A549 (cell line): ENCODE measurements at regions of chr19 and their contacts with region 1.

Region 1: DNA sequence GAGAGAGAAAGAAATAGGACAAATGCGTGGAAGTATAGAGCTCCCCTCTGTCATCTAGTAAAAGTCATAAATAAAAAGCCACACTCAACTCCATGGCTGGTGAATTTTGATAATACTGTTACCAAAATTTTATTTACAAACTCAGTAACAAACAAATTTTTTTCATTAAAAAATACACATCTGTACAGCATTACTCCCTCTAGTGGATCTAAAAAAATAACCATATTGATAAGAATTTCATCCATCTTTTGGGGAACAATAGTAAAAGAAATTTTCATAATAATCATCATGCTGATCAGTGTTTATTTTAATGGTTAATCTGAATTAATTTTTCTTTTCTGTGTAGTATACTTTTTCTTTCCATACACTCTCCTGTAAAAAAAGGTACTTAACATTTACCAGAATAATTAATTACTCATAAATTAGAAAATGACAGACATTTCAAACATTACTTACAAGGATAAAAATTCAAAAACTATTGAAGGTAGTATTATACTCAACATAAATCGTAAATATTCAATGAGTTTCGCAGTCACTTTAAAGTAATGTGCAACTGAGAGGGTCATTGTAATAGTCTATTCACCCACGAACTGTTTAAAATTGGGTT is 173.5 kb upstream of the LSM14A start:
- DNase-seq: peak; percentile 16 to 44
- ATAC-seq: peak in 1 of 2 experiments; percentile 38; a peak in 1 of 6 replicates
- H3K4me3 ChIP-seq: peak overlapping the region; percentile 3; the same call in 2 of the 3 replicates
- H3K27ac ChIP-seq: no peak overlapping the region
- H3K4me1 ChIP-seq: peaks cover 10% of the 10 kb centered on the region; the same call in 2 of the 3 replicates
- CTCF ChIP-seq: peak; percentile 82
- EP300 ChIP-seq: no peak
- POLR2A ChIP-seq: no peak
- RAD21 ChIP-seq: peak; percentile 58 to 73

Region 2: GRCh38 chr19:33785795-33786194 is 213.0 kb before region 1 on chr19:
- CTCF ChIA-PET with region 1: interaction called, 17 read pairs
- POLR2A ChIA-PET with region 1: no interaction called
- DNase-seq: no peak
- ATAC-seq: no peak
- H3K4me3 ChIP-seq: no peak overlapping the region
- H3K27ac ChIP-seq: no peak overlapping the region
- H3K4me1 ChIP-seq: peaks cover 19% of the 10 kb centered on the region
- CTCF ChIP-seq: no peak
- EP300 ChIP-seq: no peak
- POLR2A ChIP-seq: no peak
- RAD21 ChIP-seq: no peak

Region 3: GRCh38 chr19:33795370-33796163 is 203.3 kb before region 1 on chr19:
- CTCF ChIA-PET with region 1: interaction called, 19 read pairs
- POLR2A ChIA-PET with region 1: interaction called, 3 read pairs
- DNase-seq: peak; percentile 94 to 96
- ATAC-seq: peak; percentile 70 to 80
- H3K4me3 ChIP-seq: peak overlapping the region; percentile 88
- H3K27ac ChIP-seq: peak overlapping the region; percentile 96 to 97
- H3K4me1 ChIP-seq: peaks cover 28% of the 10 kb centered on the region
- CTCF ChIP-seq: peak; percentile 100
- EP300 ChIP-seq: peak; percentile 34 to 73; a peak in 1 of 5 replicates
- POLR2A ChIP-seq: peak; percentile 85
- RAD21 ChIP-seq: peak; percentile 42 to 87; a peak in 4 of 5 replicates

Region 4: DNA sequence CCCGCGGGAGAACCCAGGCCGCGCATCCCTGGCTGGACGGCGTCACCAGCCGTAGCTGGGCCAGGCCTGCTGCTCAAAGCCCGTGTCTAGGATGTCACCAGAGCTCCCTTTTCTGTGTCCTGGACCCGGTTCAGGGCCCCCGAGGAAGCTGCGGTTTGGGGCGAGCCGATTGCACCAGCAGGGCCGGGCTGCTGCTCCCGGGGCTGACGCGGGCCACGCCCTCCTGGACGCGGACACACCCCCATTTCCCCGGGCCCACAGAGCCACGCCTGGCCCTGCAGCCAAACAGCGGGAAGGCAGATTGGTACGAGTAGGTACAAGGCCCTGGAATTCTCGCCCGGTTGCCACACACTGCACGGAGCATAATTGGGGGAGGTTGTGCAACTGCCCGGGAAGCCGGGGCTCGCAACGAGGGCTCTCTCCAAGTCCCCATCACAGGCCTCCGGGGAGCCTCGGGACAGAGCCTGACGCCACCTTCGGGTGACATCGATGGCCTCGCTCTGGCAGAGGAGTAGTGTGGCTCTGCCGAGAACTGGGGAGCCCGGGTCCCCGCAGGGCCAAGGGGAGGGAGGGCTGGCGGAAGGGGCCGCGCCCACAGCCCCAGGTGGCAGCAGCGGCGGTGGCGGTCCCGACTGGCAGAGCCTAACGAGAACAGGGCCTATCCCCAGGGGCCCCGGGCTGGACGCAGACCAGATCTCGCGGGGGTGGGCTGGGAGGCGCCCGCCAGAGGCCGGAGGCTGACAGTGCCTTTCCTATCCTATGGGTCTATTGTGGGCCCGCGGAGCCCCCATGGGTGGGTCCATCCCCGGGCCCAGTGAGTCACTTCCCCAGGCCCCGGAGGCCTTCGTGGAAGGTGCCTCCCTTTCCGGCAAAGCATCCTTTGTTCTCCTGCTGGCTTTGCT is 178.7 kb before region 1 on chr19:
- CTCF ChIA-PET with region 1: interaction called, 11 read pairs
- POLR2A ChIA-PET with region 1: no interaction called
- DNase-seq: peak; percentile 76 to 93
- ATAC-seq: peak; percentile 90 to 92
- H3K4me3 ChIP-seq: peak overlapping the region; percentile 35
- H3K27ac ChIP-seq: peak overlapping the region; percentile 67 to 84
- H3K4me1 ChIP-seq: peaks cover 24% of the 10 kb centered on the region
- CTCF ChIP-seq: peak; percentile 13; the same call in 1 of the 3 replicates
- EP300 ChIP-seq: no peak
- POLR2A ChIP-seq: no peak
- RAD21 ChIP-seq: peak in 1 of 2 experiments; percentile 26; a peak in 1 of 5 replicates

Region 5: GRCh38 chr19:33963514-33963913 is 35.3 kb before region 1 on chr19:
- CTCF ChIA-PET with region 1: interaction called, 14 read pairs
- POLR2A ChIA-PET with region 1: no interaction called
- DNase-seq: no peak
- ATAC-seq: no peak
- H3K4me3 ChIP-seq: no peak overlapping the region
- H3K27ac ChIP-seq: no peak overlapping the region
- H3K4me1 ChIP-seq: no peaks in the 10 kb centered on the region
- CTCF ChIP-seq: no peak
- EP300 ChIP-seq: no peak
- POLR2A ChIP-seq: no peak; the same call in 1 of the 2 replicates
- RAD21 ChIP-seq: no peak

Region 6: GRCh38 chr19:33982706-33983105 is 16.1 kb before region 1 on chr19:
- CTCF ChIA-PET with region 1: interaction called, 25 read pairs
- POLR2A ChIA-PET with region 1: no interaction called
- DNase-seq: no peak
- ATAC-seq: no peak
- H3K4me3 ChIP-seq: no peak overlapping the region
- H3K27ac ChIP-seq: no peak overlapping the region
- H3K4me1 ChIP-seq: no peaks in the 10 kb centered on the region
- CTCF ChIP-seq: no peak
- EP300 ChIP-seq: no peak
- POLR2A ChIP-seq: no peak
- RAD21 ChIP-seq: no peak

Region 7: DNA sequence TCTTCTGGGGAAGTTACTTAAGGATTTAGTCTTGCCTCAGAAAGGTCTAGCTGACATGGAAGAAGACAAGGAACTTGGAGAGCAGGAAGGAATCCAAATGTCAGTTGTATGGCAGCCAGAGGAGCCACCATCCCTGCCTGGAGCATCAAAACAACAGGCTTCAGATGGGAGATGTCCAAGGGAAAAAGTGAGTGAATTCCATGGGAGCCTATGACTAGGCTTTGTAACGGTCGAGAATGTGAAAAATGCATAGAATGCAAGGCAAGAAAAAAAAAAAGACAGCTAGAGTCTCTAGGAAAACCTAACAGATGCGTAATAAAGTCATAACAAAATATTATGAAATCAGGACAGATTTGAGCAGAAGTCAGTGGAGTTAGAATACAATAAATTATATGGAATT is 10.3 kb before region 1 on chr19:
- CTCF ChIA-PET with region 1: interaction called, 25 read pairs
- POLR2A ChIA-PET with region 1: no interaction called
- DNase-seq: no peak
- ATAC-seq: no peak
- H3K4me3 ChIP-seq: no peak overlapping the region
- H3K27ac ChIP-seq: no peak overlapping the region
- H3K4me1 ChIP-seq: no peaks in the 10 kb centered on the region
- CTCF ChIP-seq: no peak
- EP300 ChIP-seq: no peak
- POLR2A ChIP-seq: no peak
- RAD21 ChIP-seq: no peak